Heart right ventricle (tissue), 16 donors: ENCODE measurements at regions of chr18 and their contacts with region 1.

Region 1: GRCh38 chr18:13112982-13113381 is 105.6 kb upstream of the LDLRAD4 start:
- DNase-seq: peak; percentile 77 to 80
- ATAC-seq: peak; percentile 93 to 100 (median 97)
- H3K4me3 ChIP-seq: no peak overlapping the region
- H3K27ac ChIP-seq: peak overlapping the region in 7 of 10 donors; percentile 11 to 66 (median 40)
- H3K4me1 ChIP-seq: peaks cover 0 to 13% (median 3%) of the 10 kb centered on the region in 9 donors
- H3K27me3 ChIP-seq: no peaks in the 10 kb centered on the region
- CTCF ChIP-seq: peak; percentile 30 to 73 (median 51)

Region 2: DNA sequence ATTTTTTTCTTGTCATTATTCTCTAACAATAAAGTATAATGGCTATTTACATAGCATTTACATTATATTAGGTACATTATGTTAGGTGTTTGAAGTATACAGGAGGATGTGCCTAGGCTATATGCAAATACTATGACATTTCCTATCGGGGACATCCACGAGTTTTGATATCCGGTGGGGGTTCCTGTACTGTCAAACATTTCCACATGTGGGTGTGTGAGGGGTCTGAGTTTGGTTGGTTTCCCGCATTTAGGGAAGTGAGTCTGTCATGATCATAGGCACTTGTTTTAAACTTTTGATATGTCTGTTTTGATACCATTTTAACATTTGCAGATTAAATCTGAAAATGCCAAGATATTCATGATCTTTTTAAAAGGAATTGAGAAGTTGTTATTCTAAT is 45.9 kb before region 1 on chr18:
- intact Hi-C with region 1: loop called in 1 of 10 experiments (anchors 10 kb)
- DNase-seq: no peak
- ATAC-seq: no peak
- H3K4me3 ChIP-seq: no peak overlapping the region
- H3K27ac ChIP-seq: no peak overlapping the region
- H3K4me1 ChIP-seq: peaks cover 0 to 8% (median 0%) of the 10 kb centered on the region in 9 donors
- H3K27me3 ChIP-seq: no peaks in the 10 kb centered on the region
- CTCF ChIP-seq: no peak

Region 3: GRCh38 chr18:13268158-13269012 is 155.4 kb after region 1 on chr18:
- intact Hi-C with region 1: no loop called
- DNase-seq: no peak
- ATAC-seq: peak in 1 of 8 donors; percentile 7
- H3K4me3 ChIP-seq: no peak overlapping the region
- H3K27ac ChIP-seq: peak overlapping the region; percentile 10 to 81 (median 66)
- H3K4me1 ChIP-seq: peaks cover 35 to 100% (median 93%) of the 10 kb centered on the region in 9 donors
- H3K27me3 ChIP-seq: no peaks in the 10 kb centered on the region
- CTCF ChIP-seq: no peak